Activated CD4-positive, alpha-beta T cell treated with anti-CD3 and anti-CD28 coated beads for 36 hours (primary cell): ENCODE measurements at regions of chr9 and their contacts with region 1.

Region 1: DNA sequence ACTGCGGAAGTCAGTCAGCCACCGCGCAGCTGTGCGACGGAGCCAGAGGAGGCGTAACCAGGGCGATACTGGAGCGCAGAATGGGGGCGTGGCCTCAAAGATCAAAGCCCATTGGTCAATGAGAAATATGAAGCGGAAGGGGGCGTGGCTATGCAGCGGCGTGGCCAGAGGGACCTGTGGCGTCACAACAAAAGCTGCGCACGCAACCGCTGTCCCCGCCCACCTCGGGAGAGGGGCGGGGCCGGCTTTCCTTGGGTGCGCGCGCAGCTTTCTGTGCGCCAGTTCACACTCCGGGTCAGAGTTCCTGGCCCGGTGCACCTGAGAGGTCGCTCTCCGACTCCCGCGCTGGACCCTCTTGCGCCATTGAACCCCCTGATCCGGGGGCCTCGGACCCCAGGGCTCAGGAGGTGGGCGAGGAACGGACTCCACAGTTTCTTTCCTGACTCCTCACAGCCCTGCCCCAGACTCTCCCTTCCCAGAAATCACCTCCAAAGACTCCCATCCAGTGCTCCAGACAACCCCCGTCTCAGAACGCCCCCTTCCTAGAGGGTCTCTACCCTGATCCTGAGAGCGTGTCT is at the starts of genes GOLGA2 and SWI5:
- DNase-seq: peak; percentile 100
- ATAC-seq: peak; percentile 99
- H3K4me3 Mint-ChIP-seq: peak within 1 kb of the TSS; percentile 97
- H3K27ac Mint-ChIP-seq: peak within 1 kb of the TSS; percentile 95
- H3K4me1 Mint-ChIP-seq: peaks cover 31% of the 10 kb centered on the region
- H3K27me3 Mint-ChIP-seq: no peaks in the 10 kb centered on the region
- total RNA-seq, gene GOLGA2: 28.4 to 29.4 TPM
- total RNA-seq, gene SWI5: 13.1 to 14.1 TPM

Region 2: DNA sequence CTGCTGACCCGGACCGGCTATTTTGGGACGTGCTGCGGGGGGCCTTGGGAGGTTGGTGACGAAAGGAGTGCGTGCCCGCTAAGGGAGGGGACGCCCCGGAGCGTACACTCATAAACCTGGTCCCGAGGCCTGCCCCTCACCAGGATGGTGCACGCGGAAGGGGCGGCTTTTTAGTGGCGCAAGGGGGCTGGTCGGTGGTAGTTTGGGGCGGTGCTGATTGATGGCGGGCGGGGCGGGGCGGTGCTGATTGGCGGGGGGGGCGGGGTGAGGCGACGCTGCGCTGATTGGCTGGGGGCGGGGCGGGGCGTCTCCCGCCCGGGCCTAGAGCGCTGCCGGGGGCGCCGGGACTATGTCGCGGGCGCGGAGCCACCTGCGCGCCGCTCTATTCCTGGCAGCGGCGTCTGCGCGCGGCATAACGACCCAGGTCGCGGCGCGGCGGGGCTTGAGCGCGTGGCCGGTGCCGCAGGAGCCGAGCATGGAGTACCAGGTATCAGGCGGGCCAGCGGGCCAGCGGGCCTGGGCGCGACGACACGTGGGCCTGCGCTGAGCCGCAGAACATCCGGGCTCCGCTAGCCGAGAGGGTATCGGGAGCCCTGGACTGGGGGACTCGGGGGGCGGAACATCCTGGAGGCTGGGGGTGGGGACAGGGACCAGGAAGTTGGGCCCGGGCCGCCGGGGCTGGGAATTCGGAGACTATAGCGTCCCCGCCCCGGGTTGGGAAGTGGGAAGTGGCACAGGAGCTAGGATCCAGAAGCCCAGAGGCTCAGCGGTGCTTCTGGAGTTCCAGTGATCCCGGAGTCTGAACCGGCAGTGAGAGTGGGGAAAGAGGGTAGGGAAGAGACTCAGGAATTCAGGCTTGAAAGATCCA is 473.3 kb before region 1 on chr9 and contains the start of gene FPGS:
- CTCF ChIA-PET with region 1: no interaction called
- POLR2A ChIA-PET with region 1: interaction called, 3 read pairs
- intact Hi-C with region 1: loop called in 1 of 2 experiments (anchors 2 kb)
- DNase-seq: peak; percentile 93
- ATAC-seq: peak; percentile 86
- H3K4me3 Mint-ChIP-seq: peak within 1 kb of the TSS; percentile 98
- H3K27ac Mint-ChIP-seq: peak within 1 kb of the TSS; percentile 95
- H3K4me1 Mint-ChIP-seq: peaks cover 26% of the 10 kb centered on the region
- H3K27me3 Mint-ChIP-seq: no peaks in the 10 kb centered on the region
- total RNA-seq, gene FPGS: 71.9 to 80.4 TPM

Region 3: GRCh38 chr9:128249908-128250838 is 25.9 kb before region 1 on chr9:
- CTCF ChIA-PET with region 1: interaction called, 4 read pairs
- POLR2A ChIA-PET with region 1: interaction called, 4 read pairs
- intact Hi-C with region 1: loop called (anchors 1 kb)
- DNase-seq: peak; percentile 99
- ATAC-seq: peak; percentile 98
- H3K4me3 Mint-ChIP-seq: peak overlapping the region; percentile 78
- H3K27ac Mint-ChIP-seq: peak overlapping the region; percentile 42
- H3K4me1 Mint-ChIP-seq: peaks cover 7% of the 10 kb centered on the region
- H3K27me3 Mint-ChIP-seq: peaks cover 10% of the 10 kb centered on the region

Region 4: DNA sequence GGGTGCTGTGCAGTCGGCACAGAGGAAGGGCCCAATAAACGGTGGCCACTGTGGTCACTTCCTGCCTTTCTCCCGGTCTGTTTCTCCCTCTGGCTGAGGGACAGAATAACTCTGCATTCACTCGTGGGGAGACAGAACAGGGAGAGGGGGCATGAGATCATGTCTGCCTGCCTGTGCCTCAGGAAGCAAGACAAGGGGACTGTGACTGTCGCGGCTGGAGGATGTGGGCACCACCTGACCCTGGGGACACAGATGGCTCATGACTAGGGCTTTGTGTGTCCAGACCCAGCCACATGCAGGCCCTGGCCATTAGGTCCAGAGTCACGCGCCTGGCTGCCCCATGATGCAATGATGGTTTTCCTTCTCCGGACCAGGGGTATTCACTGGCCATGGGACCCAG is 40.3 kb after region 1 on chr9:
- CTCF ChIA-PET with region 1: no interaction called
- POLR2A ChIA-PET with region 1: no interaction called
- intact Hi-C with region 1: no loop called
- DNase-seq: no peak
- ATAC-seq: no peak
- H3K4me3 Mint-ChIP-seq: no peak overlapping the region
- H3K27ac Mint-ChIP-seq: no peak overlapping the region
- H3K4me1 Mint-ChIP-seq: no peaks in the 10 kb centered on the region
- H3K27me3 Mint-ChIP-seq: no peaks in the 10 kb centered on the region

Region 5: DNA sequence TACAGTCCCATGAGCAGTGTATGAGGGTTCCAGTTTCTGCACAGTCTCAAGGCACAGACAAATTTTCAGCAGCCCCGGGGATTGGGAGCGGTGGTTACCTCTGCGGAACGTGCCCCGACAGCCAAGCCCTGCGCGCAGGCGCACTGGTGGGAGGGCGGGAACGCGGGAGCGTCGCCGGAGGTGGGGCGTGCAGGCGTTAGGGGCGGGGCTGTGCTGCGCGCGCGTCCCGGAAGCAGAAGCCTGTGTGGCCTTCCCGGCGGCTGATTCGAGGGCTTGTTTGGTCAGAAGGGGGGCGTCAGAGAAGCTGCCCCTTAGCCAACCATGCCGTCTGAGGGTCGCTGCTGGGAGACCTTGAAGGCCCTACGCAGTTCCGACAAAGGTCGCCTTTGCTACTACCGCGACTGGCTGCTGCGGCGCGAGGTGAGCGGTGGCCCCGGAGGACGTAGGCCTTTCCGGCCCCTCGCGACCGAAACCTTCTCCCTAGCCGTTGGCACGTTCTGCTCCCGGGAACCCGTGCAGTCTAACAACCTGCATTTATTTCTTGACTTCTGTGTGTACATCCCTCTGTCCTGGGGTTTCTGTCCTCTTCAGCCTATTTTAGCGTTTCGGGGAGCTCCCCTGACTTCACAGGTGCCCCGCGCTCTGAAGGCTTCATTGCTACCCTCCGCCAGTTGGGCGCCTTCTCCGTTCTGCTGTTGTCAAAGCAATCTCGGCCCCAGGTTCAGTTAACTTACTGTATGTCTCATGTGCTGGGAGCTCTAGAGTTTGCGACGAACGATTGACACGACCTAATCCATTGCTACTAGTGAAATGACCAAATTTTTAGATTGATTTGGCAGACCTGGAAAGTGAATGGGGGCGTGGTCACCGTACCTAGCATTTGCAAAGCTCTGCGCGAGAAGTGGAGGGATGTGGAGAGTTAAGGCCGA is 228.7 kb after region 1 on chr9 and contains the start of gene GLE1:
- CTCF ChIA-PET with region 1: no interaction called
- POLR2A ChIA-PET with region 1: interaction called, 3 read pairs
- intact Hi-C with region 1: loop called in 1 of 2 experiments (anchors 1 kb)
- DNase-seq: peak; percentile 98
- ATAC-seq: peak; percentile 99
- H3K4me3 Mint-ChIP-seq: peak within 1 kb of the TSS; percentile 95
- H3K27ac Mint-ChIP-seq: peak within 1 kb of the TSS; percentile 99
- H3K4me1 Mint-ChIP-seq: peaks cover 21% of the 10 kb centered on the region
- H3K27me3 Mint-ChIP-seq: no peaks in the 10 kb centered on the region
- total RNA-seq, gene GLE1: 52.5 to 54.4 TPM

Region 6: DNA sequence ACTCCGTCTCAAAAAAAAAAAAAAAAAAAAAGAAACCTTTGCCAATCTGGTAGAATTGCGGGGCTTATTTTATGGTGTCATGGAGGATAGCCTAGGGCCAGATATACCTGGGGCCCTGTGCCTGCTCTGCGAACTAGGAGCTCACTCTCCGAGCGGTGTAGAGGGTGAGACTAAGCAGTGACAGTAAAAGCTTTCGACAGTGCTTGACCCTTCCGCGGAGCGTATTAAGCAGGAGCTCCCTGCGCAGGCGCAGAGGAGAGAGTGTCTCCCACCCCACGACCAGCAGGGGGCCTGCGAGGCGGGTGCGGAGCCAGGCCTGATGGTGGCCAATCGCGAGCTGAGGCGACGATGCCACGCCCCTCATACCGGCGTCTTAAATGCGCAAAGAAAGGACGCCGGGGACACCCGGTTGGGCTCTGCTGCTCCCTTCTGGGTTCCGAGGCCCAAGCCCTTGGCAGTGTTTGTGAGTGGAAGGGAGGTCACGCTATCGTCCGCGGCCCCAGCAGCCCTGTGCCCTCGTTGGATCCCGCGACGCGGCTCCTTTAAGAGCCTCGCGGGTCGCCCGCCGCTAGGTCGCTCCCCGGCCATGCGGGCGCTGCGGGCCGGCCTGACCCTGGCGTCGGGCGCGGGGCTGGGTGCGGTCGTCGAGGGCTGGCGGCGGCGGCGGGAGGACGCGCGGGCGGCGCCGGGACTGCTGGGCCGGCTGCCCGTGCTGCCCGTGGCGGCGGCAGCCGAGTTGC is 542.2 kb after region 1 on chr9 and contains the start of gene ENDOG:
- CTCF ChIA-PET with region 1: no interaction called
- POLR2A ChIA-PET with region 1: no interaction called
- intact Hi-C with region 1: loop called in 1 of 2 experiments (anchors 1 kb)
- DNase-seq: peak; percentile 98
- ATAC-seq: peak; percentile 98
- H3K4me3 Mint-ChIP-seq: peak within 1 kb of the TSS; percentile 76
- H3K27ac Mint-ChIP-seq: peak within 1 kb of the TSS; percentile 80
- H3K4me1 Mint-ChIP-seq: peaks cover 13% of the 10 kb centered on the region
- H3K27me3 Mint-ChIP-seq: no peaks in the 10 kb centered on the region
- total RNA-seq, gene ENDOG: 7.3 to 9.3 TPM

Region 7: DNA sequence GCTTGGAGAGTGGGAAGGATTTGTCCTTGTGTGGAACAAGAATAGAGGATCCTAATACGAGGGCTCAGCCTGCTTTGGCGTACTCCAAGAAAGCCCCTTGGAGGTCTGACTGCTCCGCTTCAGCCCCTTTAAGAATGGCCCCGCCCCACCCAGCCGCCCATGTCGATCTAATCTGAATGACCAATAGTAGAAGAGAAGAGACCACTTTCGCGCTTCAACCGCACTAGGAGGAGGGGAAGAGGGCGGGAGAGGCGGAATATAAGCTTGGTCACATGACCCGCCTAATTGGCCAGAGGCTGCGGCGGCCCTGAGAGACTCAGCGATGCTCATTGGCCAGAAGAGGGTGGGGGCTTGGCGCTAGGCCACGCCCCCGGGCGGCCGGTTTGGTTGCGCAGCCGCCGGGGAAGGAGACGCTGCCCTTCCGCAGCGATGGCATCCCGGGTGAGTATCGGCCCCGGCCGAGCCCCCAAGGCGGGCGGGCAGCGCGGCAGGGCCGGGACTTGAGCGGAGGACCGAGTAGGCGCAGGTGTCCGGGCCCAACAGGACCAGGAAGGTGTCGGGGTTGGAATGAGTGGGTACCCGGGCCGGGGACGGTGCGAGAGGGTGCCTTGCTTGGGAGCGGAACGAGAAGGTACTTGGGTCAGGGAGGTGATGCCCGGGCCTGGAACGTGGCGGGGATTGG is 760.3 kb after region 1 on chr9 and contains the start of gene MIGA2:
- CTCF ChIA-PET with region 1: no interaction called
- POLR2A ChIA-PET with region 1: no interaction called
- intact Hi-C with region 1: loop called in 1 of 2 experiments (anchors 2 kb)
- DNase-seq: peak; percentile 96
- ATAC-seq: peak; percentile 99
- H3K4me3 Mint-ChIP-seq: peak within 1 kb of the TSS; percentile 98
- H3K27ac Mint-ChIP-seq: peak within 1 kb of the TSS; percentile 83
- H3K4me1 Mint-ChIP-seq: peaks cover 27% of the 10 kb centered on the region
- H3K27me3 Mint-ChIP-seq: no peaks in the 10 kb centered on the region
- total RNA-seq, gene MIGA2: 15.7 to 25.8 TPM